Upper lobe of right lung (tissue), 1 donor: ENCODE measurements at regions of chr15 and their contacts with region 1.

Region 1: GRCh38 chr15:71443538-71443937 is 328.3 kb downstream of the THSD4 start:
- DNase-seq: peak; percentile 78
- ATAC-seq: peak; percentile 66
- H3K4me3 ChIP-seq: no peak overlapping the region
- H3K27ac ChIP-seq: no peak overlapping the region
- H3K4me1 ChIP-seq: peaks cover 19% of the 10 kb centered on the region
- H3K27me3 ChIP-seq: no peaks in the 10 kb centered on the region
- CTCF ChIP-seq: peak; percentile 89

Region 2: DNA sequence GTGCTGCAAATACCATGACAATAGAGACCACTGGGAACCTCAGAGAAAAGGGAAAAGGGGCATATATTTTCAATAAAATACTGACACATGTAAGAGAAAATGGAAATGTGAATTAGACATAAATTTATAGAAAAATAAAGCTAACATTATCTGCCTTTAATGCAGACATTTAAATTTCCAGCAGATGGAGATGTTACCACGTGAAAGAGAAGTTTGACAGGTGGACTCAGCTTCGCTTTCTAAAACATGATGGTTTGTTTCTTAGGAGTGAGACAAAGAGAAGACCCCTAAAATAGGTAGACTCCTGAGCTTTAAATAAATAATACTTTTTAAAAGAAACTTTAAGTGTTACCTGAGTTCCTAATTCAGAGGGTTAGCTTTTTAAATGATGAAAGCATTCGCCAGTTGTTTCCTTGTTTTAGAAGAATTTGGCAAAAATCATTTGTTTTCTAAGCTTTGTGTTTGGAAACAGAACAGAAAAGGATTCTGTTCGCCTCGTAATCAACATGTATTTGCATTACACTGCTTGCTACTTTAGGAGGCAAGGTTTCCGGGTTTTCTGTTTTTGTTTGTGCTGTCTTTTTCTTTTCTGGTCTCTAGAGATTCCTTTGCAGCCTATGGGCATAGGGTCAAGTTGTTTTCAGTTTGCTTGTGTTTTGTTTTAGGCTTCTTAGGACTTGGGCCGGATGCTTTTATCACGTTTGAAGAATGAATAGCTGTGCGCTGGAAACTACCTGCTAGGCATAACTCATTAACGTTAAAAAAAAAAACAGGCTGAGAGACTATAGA is 56.9 kb before region 1 on chr15:
- intact Hi-C with region 1: loop called (anchors 5 kb)
- DNase-seq: no peak
- ATAC-seq: peak; percentile 62
- H3K4me3 ChIP-seq: no peak overlapping the region
- H3K27ac ChIP-seq: no peak overlapping the region
- H3K4me1 ChIP-seq: peaks cover 30% of the 10 kb centered on the region
- H3K27me3 ChIP-seq: no peaks in the 10 kb centered on the region
- CTCF ChIP-seq: peak; percentile 64

Region 3: GRCh38 chr15:71496336-71496955 is 52.9 kb after region 1 on chr15:
- intact Hi-C with region 1: no loop called
- DNase-seq: no peak
- ATAC-seq: no peak
- H3K4me3 ChIP-seq: no peak overlapping the region
- H3K27ac ChIP-seq: no peak overlapping the region
- H3K4me1 ChIP-seq: peaks cover 6% of the 10 kb centered on the region
- H3K27me3 ChIP-seq: no peaks in the 10 kb centered on the region
- CTCF ChIP-seq: no peak